H1 (cell line): ENCODE measurements at regions of chr13 and their contacts with region 1.

Region 1: DNA sequence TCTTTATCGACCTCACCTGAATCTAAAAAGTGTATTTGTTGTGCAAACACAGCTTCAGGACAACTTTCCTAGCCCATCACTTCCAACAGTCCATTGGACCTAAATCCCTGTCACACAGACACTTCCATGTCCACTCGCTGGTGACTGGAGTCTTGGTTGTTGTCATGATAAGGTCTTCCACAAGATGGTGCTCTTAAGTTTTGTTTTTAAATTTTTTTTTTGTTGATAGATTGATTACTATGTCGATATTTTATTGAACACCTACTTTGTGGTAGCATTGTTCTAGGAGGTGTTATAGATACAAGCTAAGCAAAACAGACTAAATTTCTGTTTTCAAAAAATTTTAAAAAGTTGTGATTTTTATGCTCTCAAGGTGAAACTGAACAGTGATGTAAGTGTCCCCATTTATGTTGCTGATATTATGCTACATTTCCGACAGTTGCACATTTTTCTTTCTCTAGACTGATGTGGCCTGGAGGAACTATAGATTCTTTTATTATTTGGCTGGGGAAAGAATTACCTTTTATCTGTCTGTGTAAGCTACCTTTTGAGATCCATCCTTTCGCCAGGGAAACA is 8.1 kb upstream of the ERICH6B start:
- DNase-seq: no peak
- H3K4me3 ChIP-seq: no peak overlapping the region
- H3K27ac ChIP-seq: no peak overlapping the region
- H3K4me1 ChIP-seq: peaks cover 0 to 15% (median 9%) of the 10 kb centered on the region in 4 experiments; a peak in 5 of 7 replicates
- H3K27me3 ChIP-seq: no peaks in the 10 kb centered on the region
- CTCF ChIP-seq: peak; percentile 6 to 60 (median 58)
- EP300 ChIP-seq: no peak
- POLR2A ChIP-seq: no peak
- RAD21 ChIP-seq: peak; percentile 71 to 72

Region 2: GRCh38 chr13:45587897-45588296 is 35.7 kb before region 1 on chr13:
- CTCF ChIA-PET with region 1: no interaction called
- POLR2A ChIA-PET with region 1: no interaction called
- DNase-seq: no peak
- H3K4me3 ChIP-seq: no peak overlapping the region
- H3K27ac ChIP-seq: no peak overlapping the region
- H3K4me1 ChIP-seq: no peaks in the 10 kb centered on the region
- H3K27me3 ChIP-seq: no peaks in the 10 kb centered on the region
- CTCF ChIP-seq: no peak
- EP300 ChIP-seq: no peak
- POLR2A ChIP-seq: no peak
- RAD21 ChIP-seq: no peak

Region 3: GRCh38 chr13:45683701-45684100 is 60.1 kb after region 1 on chr13:
- CTCF ChIA-PET with region 1: interaction called, 46 read pairs
- POLR2A ChIA-PET with region 1: no interaction called
- DNase-seq: no peak
- H3K4me3 ChIP-seq: no peak overlapping the region
- H3K27ac ChIP-seq: no peak overlapping the region
- H3K4me1 ChIP-seq: peaks cover 0 to 12% (median 4%) of the 10 kb centered on the region in 4 experiments; a peak in 5 of 7 replicates
- H3K27me3 ChIP-seq: no peaks in the 10 kb centered on the region
- CTCF ChIP-seq: peak; percentile 34 to 46 (median 44)
- EP300 ChIP-seq: no peak
- POLR2A ChIP-seq: no peak
- RAD21 ChIP-seq: peak; percentile 24 to 51; a peak in 3 of 4 replicates

Region 4: DNA sequence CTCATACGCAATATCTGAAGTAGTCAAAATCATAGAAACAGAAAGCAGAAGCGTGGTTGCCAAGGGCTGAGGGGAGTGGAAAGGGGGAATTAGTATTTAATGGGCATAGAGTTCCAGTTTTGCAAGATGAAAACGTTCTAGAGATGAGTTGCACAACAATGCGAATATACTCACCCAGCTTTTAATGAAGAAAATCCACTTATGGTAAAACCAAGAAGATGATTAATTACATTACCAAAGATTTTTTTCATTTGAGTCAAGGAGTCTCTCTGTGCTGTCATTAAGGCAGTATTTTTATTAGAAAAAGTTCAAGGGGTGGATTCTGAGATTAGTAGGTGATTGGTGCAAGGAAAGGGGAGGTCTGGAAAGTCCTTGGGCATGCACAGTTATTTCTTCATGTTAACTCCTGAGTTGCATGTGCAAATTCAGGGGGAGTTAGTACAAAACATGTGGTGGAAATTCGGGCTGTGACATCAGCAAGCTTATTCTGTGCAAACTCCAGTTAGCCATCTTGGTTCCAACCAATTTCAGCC is 71.7 kb after region 1 on chr13:
- CTCF ChIA-PET with region 1: interaction called, 19 read pairs
- POLR2A ChIA-PET with region 1: no interaction called
- DNase-seq: no peak
- H3K4me3 ChIP-seq: no peak overlapping the region
- H3K27ac ChIP-seq: no peak overlapping the region
- H3K4me1 ChIP-seq: no peaks in the 10 kb centered on the region
- H3K27me3 ChIP-seq: no peaks in the 10 kb centered on the region
- CTCF ChIP-seq: no peak
- EP300 ChIP-seq: no peak
- POLR2A ChIP-seq: no peak
- RAD21 ChIP-seq: no peak

Region 5: DNA sequence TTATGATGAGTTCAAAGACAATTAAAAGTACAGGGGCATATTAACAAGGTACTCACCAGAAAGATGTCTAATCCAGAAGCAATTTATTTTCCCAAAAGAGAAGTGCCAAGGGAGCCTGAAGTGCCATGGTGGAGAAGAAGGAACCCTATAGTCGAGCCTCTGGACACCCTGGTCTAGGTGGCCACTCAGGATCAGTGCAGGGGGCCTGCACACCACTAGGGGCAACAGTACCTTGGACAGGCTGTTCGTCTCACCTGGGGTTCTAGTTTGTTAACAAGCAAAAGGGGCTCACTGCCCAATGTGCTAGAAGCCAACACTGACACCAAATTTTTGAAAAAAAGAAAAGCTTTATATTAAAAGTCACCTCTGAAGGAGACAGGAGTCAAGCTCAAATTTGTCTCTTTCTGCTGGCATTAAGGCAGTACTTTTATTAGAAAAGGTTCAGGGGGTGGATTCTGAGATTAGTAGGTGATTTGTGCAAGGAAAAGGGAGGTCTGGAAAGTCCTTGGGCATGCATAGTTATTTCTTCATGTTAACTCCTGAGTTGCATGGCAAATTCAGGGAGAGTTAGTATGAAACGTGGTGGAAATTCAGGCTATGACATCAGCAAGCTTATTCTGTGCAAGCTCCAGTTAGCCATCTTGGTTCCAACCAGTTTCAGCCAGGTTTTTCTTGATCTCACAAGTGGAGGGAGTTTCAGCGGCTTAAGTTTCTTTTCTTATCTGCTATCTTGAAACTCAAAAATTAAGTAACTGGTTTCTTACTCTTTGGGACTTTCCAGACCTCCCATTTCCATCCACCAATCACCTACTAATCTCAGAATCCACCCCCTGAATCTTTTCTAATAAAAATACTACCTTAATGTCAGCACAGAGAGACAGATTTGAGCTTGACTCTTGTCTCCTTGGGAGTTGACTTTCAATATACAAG is 77.6 kb after region 1 on chr13:
- CTCF ChIA-PET with region 1: interaction called, 21 read pairs
- POLR2A ChIA-PET with region 1: no interaction called
- DNase-seq: no peak
- H3K4me3 ChIP-seq: no peak overlapping the region
- H3K27ac ChIP-seq: no peak overlapping the region
- H3K4me1 ChIP-seq: peaks cover 0 to 9% (median 3%) of the 10 kb centered on the region in 4 experiments; a peak in 3 of 7 replicates
- H3K27me3 ChIP-seq: no peaks in the 10 kb centered on the region
- CTCF ChIP-seq: peak; percentile 36 to 66 (median 43)
- EP300 ChIP-seq: no peak
- POLR2A ChIP-seq: no peak
- RAD21 ChIP-seq: peak; percentile 24 to 50; a peak in 3 of 4 replicates

Region 6: GRCh38 chr13:45711951-45712350 is 88.3 kb after region 1 on chr13:
- CTCF ChIA-PET with region 1: interaction called, 76 read pairs
- POLR2A ChIA-PET with region 1: interaction called, 3 read pairs
- DNase-seq: no peak
- H3K4me3 ChIP-seq: no peak overlapping the region
- H3K27ac ChIP-seq: no peak overlapping the region
- H3K4me1 ChIP-seq: no peaks in the 10 kb centered on the region
- H3K27me3 ChIP-seq: no peaks in the 10 kb centered on the region
- CTCF ChIP-seq: no peak
- EP300 ChIP-seq: no peak
- POLR2A ChIP-seq: no peak
- RAD21 ChIP-seq: no peak

Region 7: GRCh38 chr13:45718063-45718462 is 94.5 kb after region 1 on chr13:
- CTCF ChIA-PET with region 1: interaction called, 170 read pairs
- POLR2A ChIA-PET with region 1: interaction called, 3 read pairs
- DNase-seq: no peak
- H3K4me3 ChIP-seq: no peak overlapping the region
- H3K27ac ChIP-seq: no peak overlapping the region
- H3K4me1 ChIP-seq: peaks cover 0 to under 1% (median 0%) of the 10 kb centered on the region in 4 experiments; a peak in 1 of 7 replicates
- H3K27me3 ChIP-seq: no peaks in the 10 kb centered on the region; a peak in 1 of 7 replicates
- CTCF ChIP-seq: peak; percentile 7 to 86 (median 84)
- EP300 ChIP-seq: no peak
- POLR2A ChIP-seq: no peak
- RAD21 ChIP-seq: peak; percentile 87 to 90

Region 8: DNA sequence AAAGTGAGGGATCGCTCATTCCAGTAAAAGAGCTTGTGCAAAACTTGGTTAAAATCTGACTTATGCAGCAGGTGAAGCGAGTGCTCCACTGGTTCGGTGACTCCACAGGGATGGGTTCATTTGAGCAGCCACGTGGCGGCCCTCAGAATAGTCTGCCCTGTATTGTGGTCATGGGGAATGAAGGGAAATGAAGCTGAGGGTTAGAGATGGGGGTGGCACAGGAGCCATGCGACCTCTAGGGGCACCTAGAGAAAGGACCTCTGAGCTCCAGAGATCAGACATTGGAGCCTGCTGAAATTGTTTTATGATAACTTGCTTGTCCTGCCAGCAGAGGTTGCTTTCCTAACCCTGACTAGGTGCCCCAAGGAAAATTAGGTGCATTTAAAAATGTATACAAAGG is 105.2 kb after region 1 on chr13:
- CTCF ChIA-PET with region 1: interaction called, 170 read pairs
- POLR2A ChIA-PET with region 1: no interaction called
- DNase-seq: peak; percentile 36 to 56
- H3K4me3 ChIP-seq: no peak overlapping the region
- H3K27ac ChIP-seq: no peak overlapping the region
- H3K4me1 ChIP-seq: peaks cover 0 to 2% (median under 1%) of the 10 kb centered on the region in 4 experiments; a peak in 2 of 7 replicates
- H3K27me3 ChIP-seq: peaks cover 0 to 4% (median 0%) of the 10 kb centered on the region in 4 experiments; a peak in 2 of 7 replicates
- CTCF ChIP-seq: peak; percentile 65 to 89 (median 72)
- EP300 ChIP-seq: no peak
- POLR2A ChIP-seq: no peak
- RAD21 ChIP-seq: peak; percentile 80 to 84

Region 9: GRCh38 chr13:45752510-45752909 is 128.9 kb after region 1 on chr13:
- CTCF ChIA-PET with region 1: no interaction called
- POLR2A ChIA-PET with region 1: no interaction called
- DNase-seq: no peak
- H3K4me3 ChIP-seq: no peak overlapping the region
- H3K27ac ChIP-seq: no peak overlapping the region
- H3K4me1 ChIP-seq: peaks cover 0 to 2% (median 0%) of the 10 kb centered on the region in 4 experiments; a peak in 1 of 7 replicates
- H3K27me3 ChIP-seq: no peaks in the 10 kb centered on the region
- CTCF ChIP-seq: no peak
- EP300 ChIP-seq: no peak
- POLR2A ChIP-seq: no peak
- RAD21 ChIP-seq: no peak

Region 10: DNA sequence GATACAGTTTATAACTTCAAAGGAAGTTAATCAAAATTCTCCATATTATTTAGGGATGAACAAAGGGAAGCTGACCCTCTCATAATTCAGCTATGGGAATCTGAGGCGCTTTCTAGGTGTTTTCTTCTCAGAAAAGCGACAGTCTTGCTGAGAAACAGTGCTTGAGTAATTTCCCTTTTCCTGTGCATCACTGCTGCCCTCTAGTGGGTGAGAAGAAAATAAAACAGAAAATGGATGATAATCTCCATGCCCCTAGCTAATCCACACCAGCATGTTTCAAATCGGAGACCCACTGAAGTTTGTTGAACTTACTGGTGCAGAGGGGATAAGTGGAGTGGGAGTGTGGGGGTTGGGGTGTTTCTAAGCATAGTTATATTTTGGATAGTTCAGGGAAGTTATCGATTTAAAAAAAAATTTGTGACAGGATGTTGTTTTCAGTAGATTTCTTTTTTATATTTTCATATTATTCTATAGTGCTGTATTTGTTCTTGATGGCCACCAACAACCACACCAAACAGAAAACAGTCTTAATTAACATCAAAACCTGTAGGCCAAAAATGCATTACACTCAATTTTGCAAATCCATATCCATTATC is 537.0 kb after region 1 on chr13:
- CTCF ChIA-PET with region 1: no interaction called
- POLR2A ChIA-PET with region 1: no interaction called
- DNase-seq: no peak
- H3K4me3 ChIP-seq: no peak overlapping the region
- H3K27ac ChIP-seq: no peak overlapping the region
- H3K4me1 ChIP-seq: no peaks in the 10 kb centered on the region
- H3K27me3 ChIP-seq: no peaks in the 10 kb centered on the region
- CTCF ChIP-seq: peak in 2 of 3 experiments; percentile 62 to 69; a peak in 3 of 4 replicates
- EP300 ChIP-seq: no peak
- POLR2A ChIP-seq: no peak
- RAD21 ChIP-seq: peak; percentile 71 to 81